ENCODE measurements at regions of chr1 and their contacts with region 1.

Region 1: GRCh38 chr1:24688621-24689195 is 45.6 kb downstream of the SRRM1 start:
- DNase-seq: peak; percentile 80
- ATAC-seq: peak; percentile 85
- H3K4me3 ChIP-seq: no peak overlapping the region
- H3K27ac ChIP-seq: no peak overlapping the region
- H3K4me1 ChIP-seq: peaks cover 5% of the 10 kb centered on the region
- H3K27me3 ChIP-seq: no peaks in the 10 kb centered on the region
- CTCF ChIP-seq: peak; percentile 92

Region 2: DNA sequence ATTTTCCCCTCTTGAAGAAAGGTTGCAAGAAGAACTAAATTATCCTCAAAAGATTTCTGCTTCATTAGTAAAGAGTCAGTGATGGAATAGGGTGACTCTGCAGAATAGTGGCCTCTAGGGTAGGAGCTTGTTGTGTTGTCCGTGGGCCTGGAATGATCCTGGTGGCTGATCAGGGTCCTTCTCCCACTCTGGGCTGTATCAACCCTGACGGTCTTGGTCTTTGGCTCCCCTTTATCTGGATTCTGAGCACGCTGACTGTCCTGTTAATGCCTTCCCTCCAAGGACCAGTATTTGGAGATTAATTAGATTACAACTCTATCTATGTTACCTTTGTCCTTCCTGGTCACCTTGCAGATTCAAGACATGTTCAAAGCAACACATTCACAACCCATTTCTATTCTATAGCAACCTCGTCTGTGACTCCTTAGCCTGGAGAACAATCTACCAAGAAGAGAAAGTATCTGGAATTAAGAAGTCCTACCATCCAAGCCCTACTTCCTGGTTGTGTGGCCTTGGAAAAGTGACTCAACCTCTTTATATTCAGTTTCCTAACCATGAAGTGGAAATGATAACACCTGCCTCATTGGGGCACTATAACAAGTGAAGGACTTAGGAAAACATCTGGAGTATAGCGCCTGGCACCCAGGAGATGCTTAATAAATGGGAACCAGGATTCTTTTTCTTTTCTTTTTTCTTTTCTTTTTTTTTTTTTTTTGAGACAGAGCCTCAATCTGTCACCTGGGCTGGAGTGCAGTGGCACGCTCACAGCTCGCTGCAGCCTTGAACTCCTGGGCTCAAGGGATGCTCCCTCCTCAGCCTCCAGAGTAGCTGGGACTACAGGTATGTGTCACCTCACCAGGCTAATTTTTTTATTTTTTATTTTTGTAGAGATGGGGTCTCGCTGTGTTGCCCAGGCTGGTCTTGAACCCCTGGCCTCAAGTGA is 82.1 kb before region 1 on chr1:
- CTCF ChIA-PET with region 1: no interaction called
- POLR2A ChIA-PET with region 1: no interaction called
- intact Hi-C with region 1: no loop called
- DNase-seq: peak; percentile 15
- ATAC-seq: no peak
- H3K4me3 ChIP-seq: no peak overlapping the region
- H3K27ac ChIP-seq: no peak overlapping the region
- H3K4me1 ChIP-seq: peaks cover 8% of the 10 kb centered on the region
- H3K27me3 ChIP-seq: no peaks in the 10 kb centered on the region
- CTCF ChIP-seq: no peak

Region 3: GRCh38 chr1:24673336-24673735 is 15.4 kb before region 1 on chr1:
- CTCF ChIA-PET with region 1: no interaction called
- POLR2A ChIA-PET with region 1: interaction called, 11 read pairs
- intact Hi-C with region 1: no loop called
- DNase-seq: no peak
- ATAC-seq: no peak
- H3K4me3 ChIP-seq: no peak overlapping the region
- H3K27ac ChIP-seq: no peak overlapping the region
- H3K4me1 ChIP-seq: peaks cover 2% of the 10 kb centered on the region; the same call in 1 of the 2 replicates
- H3K27me3 ChIP-seq: no peaks in the 10 kb centered on the region
- CTCF ChIP-seq: no peak

Region 4: GRCh38 chr1:24744911-24745710 is 56.4 kb after region 1 on chr1 and contains the start of gene CLIC4:
- CTCF ChIA-PET with region 1: interaction called, 9 read pairs
- POLR2A ChIA-PET with region 1: interaction called, 12 read pairs
- intact Hi-C with region 1: loop called (anchors 5 kb)
- DNase-seq: peak; percentile 99
- ATAC-seq: peak; percentile 88
- H3K4me3 ChIP-seq: peak within 1 kb of the TSS; percentile 90
- H3K27ac ChIP-seq: peak within 1 kb of the TSS; percentile 33
- H3K4me1 ChIP-seq: peaks cover 21% of the 10 kb centered on the region
- H3K27me3 ChIP-seq: no peaks in the 10 kb centered on the region
- CTCF ChIP-seq: peak; percentile 15; the same call in 1 of the 2 replicates
- total RNA-seq, gene CLIC4: 51.4 and 57.6 TPM in 2 replicates

Region 5: GRCh38 chr1:24830680-24831272 is 142.1 kb after region 1 on chr1:
- CTCF ChIA-PET with region 1: interaction called, 35 read pairs
- POLR2A ChIA-PET with region 1: interaction called, 6 read pairs
- intact Hi-C with region 1: loop called (anchors 2 kb)
- DNase-seq: peak; percentile 86
- ATAC-seq: peak; percentile 83
- H3K4me3 ChIP-seq: no peak overlapping the region
- H3K27ac ChIP-seq: no peak overlapping the region
- H3K4me1 ChIP-seq: no peaks in the 10 kb centered on the region
- H3K27me3 ChIP-seq: no peaks in the 10 kb centered on the region
- CTCF ChIP-seq: peak; percentile 92

Region 6: DNA sequence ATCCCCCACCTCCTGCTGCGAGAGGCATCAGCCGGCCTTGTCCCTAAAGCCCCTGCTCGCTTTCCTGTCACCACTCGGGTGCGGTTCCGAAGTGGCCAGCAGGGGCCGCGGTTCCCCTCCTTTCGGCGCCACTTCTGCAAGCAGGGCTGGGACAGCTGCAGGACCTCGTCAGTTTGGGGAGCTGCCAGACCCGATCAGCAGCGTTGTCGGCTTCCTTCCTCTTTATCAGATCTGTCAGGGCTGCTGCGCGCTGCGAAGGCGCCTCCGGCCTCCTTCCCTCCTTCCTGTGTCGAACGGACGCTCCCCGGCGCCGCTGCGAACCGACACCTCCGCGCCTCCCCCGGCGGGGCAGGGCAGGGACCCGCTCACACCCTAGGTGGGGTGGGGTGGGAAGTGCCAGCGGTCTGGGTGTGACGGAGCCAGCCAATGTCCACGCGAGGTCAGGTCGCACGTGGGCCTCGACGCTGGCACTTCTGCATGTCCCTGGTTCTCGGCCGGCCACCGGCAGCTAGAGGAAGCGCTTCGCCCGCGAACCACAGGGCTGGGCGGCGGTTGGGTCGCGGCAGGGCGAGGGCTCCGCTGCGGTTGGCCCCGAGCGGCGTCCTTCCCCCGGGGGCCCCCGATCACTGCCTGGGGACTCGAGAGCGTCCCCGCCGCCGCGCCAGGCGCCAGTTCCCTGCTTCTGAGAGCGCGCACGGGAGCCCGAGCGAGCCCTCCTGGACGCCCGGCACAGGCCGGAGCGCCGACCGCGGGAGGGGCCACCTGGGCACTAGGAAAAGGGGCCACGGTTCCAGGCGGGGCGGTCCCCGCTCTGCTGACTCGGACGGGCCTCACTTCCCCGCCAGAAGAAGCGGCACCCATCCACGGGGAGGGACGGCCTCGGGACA is 159.5 kb after region 1 on chr1:
- CTCF ChIA-PET with region 1: interaction called, 10 read pairs
- POLR2A ChIA-PET with region 1: no interaction called
- intact Hi-C with region 1: no loop called
- DNase-seq: peak; percentile 90
- ATAC-seq: peak; percentile 89
- H3K4me3 ChIP-seq: peak overlapping the region; percentile 76
- H3K27ac ChIP-seq: no peak overlapping the region
- H3K4me1 ChIP-seq: no peaks in the 10 kb centered on the region; the same call in 1 of the 2 replicates
- H3K27me3 ChIP-seq: no peaks in the 10 kb centered on the region
- CTCF ChIP-seq: peak; percentile 90